ENCODE measurements at regions of chr22 and their contacts with region 1.

Region 1: GRCh38 chr22:30005213-30005857 is 74.9 kb upstream of the HORMAD2 start:
- DNase-seq: peak in 41 of 42 donors; percentile 48 to 91 (median 77)

Region 2: DNA sequence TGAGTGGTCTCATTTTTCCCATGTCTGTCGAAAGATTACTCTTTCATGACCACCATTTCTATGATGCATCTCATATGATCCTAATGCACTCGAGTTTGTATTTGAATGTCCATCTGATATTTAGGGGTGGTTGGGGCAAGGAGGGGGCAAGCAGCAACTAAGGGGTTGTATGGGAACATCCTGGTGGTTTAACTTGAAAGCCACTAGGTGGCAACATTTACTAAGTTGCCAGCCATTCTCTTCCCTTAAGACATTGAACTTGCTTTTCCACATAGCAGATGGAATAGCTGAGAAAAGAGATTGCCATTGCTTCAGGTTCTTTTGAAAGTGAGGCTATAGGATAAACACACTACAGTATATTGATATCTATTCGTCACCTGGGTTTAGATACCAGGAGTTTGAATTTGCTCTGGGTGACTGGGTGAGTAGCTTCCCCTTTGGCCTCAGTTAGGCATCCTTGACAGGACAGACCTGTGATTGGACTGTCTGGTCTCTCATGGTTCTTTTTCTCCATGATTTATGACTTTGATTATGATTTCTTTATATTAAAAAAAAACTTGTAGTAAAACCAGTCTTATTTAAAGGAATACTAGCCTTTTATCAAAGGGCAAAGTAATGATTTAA is 369.5 kb before region 1 on chr22:
- intact Hi-C with region 1: loop called (anchors 10 kb)
- DNase-seq: peak in 12 of 42 donors; percentile 12 to 64 (median 30)

Region 3: DNA sequence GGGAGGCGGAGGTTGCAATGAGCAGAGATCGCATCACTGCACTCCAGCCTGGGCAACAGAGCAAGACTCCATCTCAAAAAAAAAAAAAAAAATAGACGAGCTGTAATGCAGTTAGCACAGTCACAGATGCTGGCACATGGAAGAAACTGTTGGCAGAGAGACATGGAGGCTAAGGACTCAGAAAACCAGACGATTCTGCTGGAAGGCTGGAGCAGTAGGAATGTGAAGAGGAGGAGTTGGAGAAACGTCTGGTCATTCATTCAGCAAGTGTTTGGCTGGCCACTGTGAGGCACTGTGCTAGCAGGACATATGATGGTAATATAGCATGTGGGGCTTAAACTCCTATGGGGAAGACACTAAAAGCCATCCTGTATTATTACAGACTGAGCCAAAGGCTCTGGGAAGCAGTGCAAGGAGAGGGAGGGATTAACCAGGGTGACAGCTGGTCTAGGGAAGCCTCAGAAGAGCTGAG is 233.1 kb before region 1 on chr22:
- intact Hi-C with region 1: loop called (anchors 10 kb)
- DNase-seq: no peak

Region 4: GRCh38 chr22:29820961-29821789 is 184.2 kb before region 1 on chr22:
- intact Hi-C with region 1: loop called (anchors 10 kb)
- DNase-seq: peak in 25 of 42 donors; percentile 14 to 67 (median 38)

Region 5: GRCh38 chr22:30054588-30055033 is 49.3 kb after region 1 on chr22:
- intact Hi-C with region 1: no loop called
- DNase-seq: peak in 1 of 42 donors; percentile 3

Region 6: GRCh38 chr22:30104501-30105156 is 99.3 kb after region 1 on chr22:
- intact Hi-C with region 1: no loop called
- DNase-seq: no peak